Head of caudate nucleus (tissue), 42 donors: ENCODE measurements at regions of chr13 and their contacts with region 1.

Region 1: GRCh38 chr13:75876360-75877050 is 240.4 kb downstream of the LMO7 start:
- DNase-seq: peak in 41 of 42 donors; percentile 24 to 88 (median 67)

Region 2: DNA sequence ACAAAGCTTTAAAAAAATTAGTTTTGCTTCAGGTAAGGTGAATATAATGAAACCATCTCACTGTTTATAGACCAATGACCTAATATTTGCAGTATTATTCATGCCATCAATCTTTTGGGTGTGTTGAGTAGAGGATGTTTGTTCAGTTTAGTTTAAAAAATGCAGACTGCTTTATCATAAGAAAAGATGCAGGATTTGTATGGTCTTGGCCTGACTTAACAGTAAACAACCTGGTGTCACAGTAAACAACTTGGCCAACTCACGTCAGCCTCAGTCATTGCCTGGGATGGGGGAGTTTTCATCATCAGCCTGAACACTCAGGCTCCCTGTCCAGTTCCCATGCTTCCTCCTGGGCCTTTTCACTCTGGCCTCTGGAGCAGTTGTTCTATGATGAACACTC is 185.3 kb before region 1 on chr13:
- intact Hi-C with region 1: loop called (anchors 10 kb)
- DNase-seq: no peak

Region 3: DNA sequence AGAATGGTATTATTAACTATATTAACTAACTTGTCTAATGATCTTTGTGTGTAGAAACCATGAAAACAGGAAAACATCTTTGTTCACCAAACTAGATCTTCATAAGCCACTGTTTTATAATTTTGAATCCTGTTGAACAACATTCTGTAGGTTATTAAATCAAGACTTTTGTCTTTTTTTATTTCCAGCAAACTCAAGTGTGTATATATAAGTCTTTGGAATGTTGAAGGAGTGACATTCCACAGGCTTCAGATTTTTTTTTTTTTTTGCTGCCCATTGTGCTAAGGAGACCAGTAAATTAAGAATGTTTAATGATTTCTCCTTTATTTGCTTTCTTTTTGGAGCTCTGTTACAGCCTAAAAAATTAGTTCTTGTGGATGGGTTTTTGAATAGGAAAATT is 150.8 kb before region 1 on chr13:
- intact Hi-C with region 1: no loop called
- DNase-seq: no peak

Region 4: GRCh38 chr13:76016799-76017400 is 140.4 kb after region 1 on chr13:
- intact Hi-C with region 1: loop called (anchors 5 kb)
- DNase-seq: peak in 7 of 42 donors; percentile 15 to 65 (median 25)

Region 5: GRCh38 chr13:76473552-76474134 is 597.1 kb after region 1 on chr13:
- intact Hi-C with region 1: loop called (anchors 2 kb)
- DNase-seq: peak; percentile 23 to 95 (median 83)

Region 6: GRCh38 chr13:76903544-76904162 is 1027.1 kb after region 1 on chr13:
- intact Hi-C with region 1: loop called (anchors 10 kb)
- DNase-seq: peak; percentile 44 to 88 (median 74)

Region 7: GRCh38 chr13:76980075-76980718 is 1103.7 kb after region 1 on chr13:
- intact Hi-C with region 1: loop called (anchors 10 kb)
- DNase-seq: peak; percentile 44 to 95 (median 86)